Activated naive CD4-positive, alpha-beta T cell treated with anti-CD3 and anti-CD28 coated beads, Interleukin-2, amount 10 ng/mL, durations not matched to agents 7 days and 5 days (primary cell): ENCODE measurements at regions of chr1 and their contacts with region 1.

Region 1: DNA sequence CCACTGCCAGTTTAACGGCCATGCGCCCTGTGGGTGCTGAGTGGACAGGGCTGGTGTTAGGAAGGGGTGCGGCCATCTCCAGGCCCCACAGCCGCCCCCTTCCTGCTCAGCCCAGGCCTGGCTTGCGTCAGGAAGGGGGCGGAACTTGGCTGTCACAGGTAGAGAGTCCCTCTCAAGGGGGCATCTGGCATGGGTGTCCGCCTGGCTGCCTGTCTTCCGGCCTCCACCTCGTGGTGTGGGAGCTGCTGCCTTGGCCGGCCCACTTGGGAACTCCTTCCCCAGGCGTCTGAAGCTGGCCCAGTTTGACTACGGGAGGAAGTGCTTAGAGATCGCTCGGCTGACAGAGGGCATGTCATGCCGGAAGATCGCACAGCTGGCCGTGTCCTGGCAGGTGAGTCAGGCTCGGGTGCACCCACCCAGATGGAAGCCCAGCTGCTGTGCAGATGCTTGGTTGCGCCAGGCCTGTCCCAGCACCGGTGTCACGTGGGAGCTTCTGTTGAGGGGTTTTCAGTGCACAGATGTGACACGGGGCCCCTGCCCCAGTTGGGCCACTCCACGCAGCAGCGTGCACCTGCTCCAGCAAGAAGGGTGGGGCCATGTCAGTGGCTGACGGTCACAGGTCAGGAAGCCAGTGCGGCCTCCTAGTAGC is 9.1 kb upstream of the ATAD3B start:
- DNase-seq: peak; percentile 48
- H3K4me3 Mint-ChIP-seq: peak overlapping the region; percentile 56
- H3K27ac Mint-ChIP-seq: peak overlapping the region; percentile 77
- H3K4me1 Mint-ChIP-seq: peaks cover 6% of the 10 kb centered on the region
- H3K27me3 Mint-ChIP-seq: peaks cover 20% of the 10 kb centered on the region

Region 2: GRCh38 chr1:1360506-1361169 is 101.8 kb before region 1 on chr1:
- CTCF ChIA-PET with region 1: no interaction called
- DNase-seq: no peak
- H3K4me3 Mint-ChIP-seq: no peak overlapping the region
- H3K27ac Mint-ChIP-seq: no peak overlapping the region
- H3K4me1 Mint-ChIP-seq: peaks cover 19% of the 10 kb centered on the region
- H3K27me3 Mint-ChIP-seq: peaks cover 73% of the 10 kb centered on the region

Region 3: DNA sequence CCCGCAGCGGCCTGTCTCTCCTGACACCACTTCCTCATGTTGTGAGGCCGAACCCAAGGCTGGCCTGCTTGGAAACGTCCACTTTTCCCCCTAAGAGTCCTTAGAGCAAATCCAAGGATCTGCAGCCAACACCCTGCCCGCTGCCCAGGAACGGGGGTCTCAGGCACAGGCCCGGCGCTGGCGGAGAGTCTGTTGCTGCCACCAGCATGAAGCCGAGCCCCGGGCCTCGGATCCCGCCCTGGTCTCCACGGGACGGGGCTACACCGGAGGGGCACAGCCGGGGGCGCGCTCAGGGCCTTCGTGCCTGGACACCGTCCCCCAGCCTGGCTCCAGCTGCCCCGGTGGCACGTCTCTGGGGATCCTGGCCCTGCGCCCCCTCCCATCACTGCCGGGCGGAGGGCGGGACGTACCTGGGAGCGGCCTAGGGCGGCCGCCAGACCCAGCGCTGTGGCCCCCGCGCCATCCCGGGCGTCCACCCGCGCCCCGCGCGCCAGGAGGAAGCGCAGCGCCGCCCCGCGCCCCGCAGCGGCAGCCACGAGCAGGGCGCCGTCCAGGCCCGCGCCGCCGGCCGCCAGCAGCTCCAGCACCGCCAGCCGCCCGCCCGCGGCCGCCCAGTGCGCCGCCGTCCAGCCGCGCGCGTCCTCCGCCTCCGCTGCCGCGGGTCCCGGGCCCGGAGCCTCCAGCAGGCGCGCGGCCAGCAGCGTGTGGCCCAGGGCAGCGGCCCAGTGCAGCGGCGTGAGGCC is 42.6 kb before region 1 on chr1:
- CTCF ChIA-PET with region 1: no interaction called
- DNase-seq: no peak
- H3K4me3 Mint-ChIP-seq: no peak overlapping the region
- H3K27ac Mint-ChIP-seq: no peak overlapping the region
- H3K4me1 Mint-ChIP-seq: peaks cover 15% of the 10 kb centered on the region
- H3K27me3 Mint-ChIP-seq: peaks cover 56% of the 10 kb centered on the region

Region 4: GRCh38 chr1:1441002-1441888 is 21.2 kb before region 1 on chr1:
- CTCF ChIA-PET with region 1: interaction called, 10 read pairs
- DNase-seq: peak; percentile 67
- H3K4me3 Mint-ChIP-seq: no peak overlapping the region
- H3K27ac Mint-ChIP-seq: no peak overlapping the region
- H3K4me1 Mint-ChIP-seq: peaks cover 2% of the 10 kb centered on the region
- H3K27me3 Mint-ChIP-seq: peaks cover 43% of the 10 kb centered on the region